Pancreas (tissue), 10 donors: ENCODE measurements at regions of chr20 and their contacts with region 1.

Region 1: DNA sequence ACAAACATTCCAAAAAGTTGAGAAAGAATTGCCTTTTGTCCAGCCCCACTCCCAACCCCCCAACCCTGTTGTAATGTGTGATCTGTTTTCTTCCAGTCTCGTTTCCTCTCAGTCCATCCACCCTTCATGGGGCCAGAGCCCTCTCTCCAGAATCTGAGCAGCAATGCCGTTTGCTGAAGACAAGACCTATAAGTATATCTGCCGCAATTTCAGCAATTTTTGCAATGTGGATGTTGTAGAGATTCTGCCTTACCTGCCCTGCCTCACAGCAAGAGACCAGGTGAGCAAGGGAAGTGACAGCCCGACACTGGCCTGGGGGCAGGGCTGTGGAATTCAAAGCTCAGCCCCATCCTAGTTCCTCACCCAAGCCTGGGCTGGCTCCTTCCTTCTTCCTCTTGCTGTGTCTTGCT is 7.8 kb downstream of the MAVS start:
- DNase-seq: no peak
- ATAC-seq: peak in 3 of 4 donors; percentile 17 to 63 (median 56)
- H3K4me3 ChIP-seq: no peak overlapping the region
- H3K27ac ChIP-seq: no peak overlapping the region
- H3K4me1 ChIP-seq: no peaks in the 10 kb centered on the region
- H3K27me3 ChIP-seq: no peaks in the 10 kb centered on the region
- CTCF ChIP-seq: no peak

Region 2: DNA sequence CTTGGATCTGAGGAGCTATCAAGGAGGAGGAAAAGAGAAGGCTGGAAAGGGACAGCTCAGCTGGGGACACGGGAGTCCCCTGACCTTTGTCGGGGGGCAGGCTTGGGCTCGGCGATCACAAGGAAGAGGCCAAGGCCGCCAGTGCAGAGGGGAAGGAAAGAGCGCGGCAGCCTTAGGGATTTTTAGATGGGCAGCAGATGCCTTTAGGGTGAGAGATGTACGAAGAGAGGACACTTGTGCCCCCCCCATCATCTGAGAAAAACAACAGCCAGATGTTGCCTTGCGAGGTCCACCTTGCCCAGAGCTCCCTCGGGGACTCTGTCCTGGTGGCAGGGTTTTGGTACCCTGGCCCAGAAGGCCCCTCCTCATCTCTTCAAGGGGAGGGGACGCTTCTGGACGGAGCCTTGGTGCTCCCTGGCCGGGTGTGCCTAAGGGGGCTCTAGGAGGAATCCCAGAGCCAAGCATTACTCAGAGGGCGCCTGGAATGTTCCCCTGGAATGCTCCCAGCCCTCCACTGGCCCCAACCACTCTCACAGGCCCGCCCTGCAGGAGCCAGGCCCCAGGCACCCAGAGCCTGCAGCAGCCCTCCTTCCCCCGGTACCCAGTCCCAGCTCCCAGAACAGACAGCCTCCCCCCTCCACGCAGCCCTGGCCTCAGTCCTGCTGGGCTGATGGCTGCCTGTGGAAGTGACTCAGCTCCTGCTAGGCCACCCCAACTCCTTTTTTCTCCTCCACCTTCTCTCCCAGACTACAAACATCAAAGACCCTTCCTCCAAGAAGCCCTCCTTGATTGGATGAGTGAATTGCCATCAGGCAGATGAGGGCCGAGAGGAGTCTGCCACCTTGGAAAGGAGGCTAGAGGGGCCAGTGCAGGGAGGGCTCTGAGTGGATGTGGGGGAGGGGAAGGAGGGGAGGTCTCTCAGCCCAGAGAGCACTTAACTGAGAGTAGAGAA is 174.4 kb before region 1 on chr20:
- intact Hi-C with region 1: loop called in 1 of 3 experiments (anchors 10 kb)
- DNase-seq: no peak
- ATAC-seq: peak in 1 of 4 donors; percentile 5
- H3K4me3 ChIP-seq: no peak overlapping the region
- H3K27ac ChIP-seq: no peak overlapping the region
- H3K4me1 ChIP-seq: peaks cover 0 to 4% (median 3%) of the 10 kb centered on the region in 3 donors
- H3K27me3 ChIP-seq: peaks cover 0 to 16% (median 0%) of the 10 kb centered on the region in 4 donors
- CTCF ChIP-seq: no peak